ENCODE measurements at regions of chr19 and their contacts with region 1.

Region 1: GRCh38 chr19:2618611-2619010 is 83.9 kb downstream of the GNG7 start:
- DNase-seq: peak; percentile 51 to 84 (median 59)
- H3K4me3 ChIP-seq: peak overlapping the region; percentile 8 to 29
- H3K4me3 Mint-ChIP-seq: peak overlapping the region; percentile 66 to 90 (median 80)
- H3K27ac ChIP-seq: peak overlapping the region; percentile 57
- H3K27ac Mint-ChIP-seq: peak overlapping the region; percentile 89 to 96 (median 93)
- H3K4me1 ChIP-seq: peaks cover 70% of the 10 kb centered on the region
- H3K4me1 Mint-ChIP-seq: peaks cover 40 to 69% (median 54%) of the 10 kb centered on the region in 4 donors
- H3K27me3 ChIP-seq: no peaks in the 10 kb centered on the region
- H3K27me3 Mint-ChIP-seq: no peaks in the 10 kb centered on the region

Region 2: DNA sequence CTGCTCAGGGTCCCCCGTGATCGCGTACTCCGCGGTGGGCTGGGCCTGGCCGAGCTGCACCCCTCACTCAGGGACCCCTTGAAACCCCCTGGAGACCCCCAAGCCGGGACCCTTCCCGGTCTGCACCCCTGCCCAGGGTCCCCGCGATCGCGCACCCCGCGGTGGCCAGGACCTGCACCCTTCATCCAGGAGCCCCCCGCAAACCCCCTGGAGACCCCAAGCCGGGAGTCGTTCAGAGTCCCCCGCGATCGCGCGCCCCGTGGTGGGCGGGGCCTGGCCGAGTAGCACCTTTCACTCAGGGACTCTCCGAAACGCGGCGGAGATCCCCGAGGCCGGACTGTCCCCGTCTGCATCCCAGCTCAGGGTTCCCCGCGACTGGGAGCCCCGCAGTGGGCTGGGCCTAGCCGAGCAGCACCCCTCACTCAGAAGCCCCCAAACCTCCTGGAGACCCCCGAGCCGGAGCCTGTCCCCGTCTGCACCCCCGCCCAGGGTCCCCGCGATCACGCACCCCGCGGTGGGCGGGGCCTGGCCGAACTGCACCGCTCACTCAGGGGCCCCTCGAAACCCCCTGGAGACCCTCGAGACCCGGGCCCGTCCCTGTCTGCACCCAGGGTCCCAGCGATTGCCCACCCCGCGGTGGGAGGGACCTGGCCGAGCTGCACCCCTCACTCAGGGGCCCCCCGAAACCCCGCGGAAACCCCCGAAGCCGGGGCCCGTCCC is 162.6 kb before region 1 on chr19:
- CTCF ChIA-PET with region 1: interaction called, 6 read pairs
- POLR2A ChIA-PET with region 1: interaction called, 10 read pairs
- intact Hi-C with region 1: no loop called
- DNase-seq: peak in 4 of 5 donors; percentile 18 to 79 (median 34)
- H3K4me3 ChIP-seq: peak overlapping the region; percentile 34 to 70
- H3K4me3 Mint-ChIP-seq: peak overlapping the region; percentile 79 to 92 (median 86)
- H3K27ac ChIP-seq: peak overlapping the region; percentile 87
- H3K27ac Mint-ChIP-seq: peak overlapping the region; percentile 76 to 95 (median 87)
- H3K4me1 ChIP-seq: peaks cover 24% of the 10 kb centered on the region
- H3K4me1 Mint-ChIP-seq: peaks cover 6 to 23% (median 13%) of the 10 kb centered on the region in 4 donors
- H3K27me3 ChIP-seq: no peaks in the 10 kb centered on the region
- H3K27me3 Mint-ChIP-seq: no peaks in the 10 kb centered on the region

Region 3: GRCh38 chr19:2507109-2507508 is 111.5 kb before region 1 on chr19:
- CTCF ChIA-PET with region 1: no interaction called
- POLR2A ChIA-PET with region 1: interaction called, 16 read pairs
- intact Hi-C with region 1: no loop called
- DNase-seq: peak; percentile 48 to 77 (median 62)
- H3K4me3 ChIP-seq: no peak overlapping the region
- H3K4me3 Mint-ChIP-seq: peak overlapping the region in 6 of 8 donors; percentile 39 to 72 (median 60)
- H3K27ac ChIP-seq: no peak overlapping the region
- H3K27ac Mint-ChIP-seq: peak overlapping the region; percentile 73 to 93 (median 83)
- H3K4me1 ChIP-seq: peaks cover 25% of the 10 kb centered on the region
- H3K4me1 Mint-ChIP-seq: peaks cover 15 to 41% (median 24%) of the 10 kb centered on the region in 4 donors
- H3K27me3 ChIP-seq: no peaks in the 10 kb centered on the region
- H3K27me3 Mint-ChIP-seq: no peaks in the 10 kb centered on the region

Region 4: GRCh38 chr19:2552859-2553258 is 65.8 kb before region 1 on chr19:
- CTCF ChIA-PET with region 1: no interaction called
- POLR2A ChIA-PET with region 1: interaction called, 10 read pairs
- intact Hi-C with region 1: no loop called
- DNase-seq: peak; percentile 74 to 84 (median 80)
- H3K4me3 ChIP-seq: peak overlapping the region; percentile 36 to 46
- H3K4me3 Mint-ChIP-seq: peak overlapping the region; percentile 52 to 93 (median 82)
- H3K27ac ChIP-seq: peak overlapping the region; percentile 12
- H3K27ac Mint-ChIP-seq: peak overlapping the region; percentile 67 to 96 (median 78)
- H3K4me1 ChIP-seq: peaks cover 24% of the 10 kb centered on the region
- H3K4me1 Mint-ChIP-seq: peaks cover 9 to 18% (median 14%) of the 10 kb centered on the region in 4 donors
- H3K27me3 ChIP-seq: no peaks in the 10 kb centered on the region
- H3K27me3 Mint-ChIP-seq: no peaks in the 10 kb centered on the region

Region 5: GRCh38 chr19:2602391-2603181 is 16.0 kb before region 1 on chr19:
- CTCF ChIA-PET with region 1: interaction called, 77 read pairs
- POLR2A ChIA-PET with region 1: interaction called, 22 read pairs
- intact Hi-C with region 1: loop called (anchors 1 kb)
- DNase-seq: no peak
- H3K4me3 ChIP-seq: no peak overlapping the region
- H3K4me3 Mint-ChIP-seq: no peak overlapping the region
- H3K27ac ChIP-seq: no peak overlapping the region
- H3K27ac Mint-ChIP-seq: peak overlapping the region in 2 of 7 donors; percentile 24 to 68
- H3K4me1 ChIP-seq: peaks cover 13% of the 10 kb centered on the region
- H3K4me1 Mint-ChIP-seq: peaks cover 7 to 18% (median 12%) of the 10 kb centered on the region in 4 donors
- H3K27me3 ChIP-seq: no peaks in the 10 kb centered on the region
- H3K27me3 Mint-ChIP-seq: no peaks in the 10 kb centered on the region

Region 6: GRCh38 chr19:2636897-2637683 is 18.5 kb after region 1 on chr19:
- CTCF ChIA-PET with region 1: interaction called, 116 read pairs
- POLR2A ChIA-PET with region 1: interaction called, 20 read pairs
- intact Hi-C with region 1: loop called (anchors 2 kb)
- DNase-seq: peak; percentile 69 to 72 (median 72)
- H3K4me3 ChIP-seq: no peak overlapping the region
- H3K4me3 Mint-ChIP-seq: peak overlapping the region in 1 of 8 donors; percentile 29
- H3K27ac ChIP-seq: no peak overlapping the region
- H3K27ac Mint-ChIP-seq: no peak overlapping the region
- H3K4me1 ChIP-seq: peaks cover 10% of the 10 kb centered on the region
- H3K4me1 Mint-ChIP-seq: peaks cover 0 to 6% (median 4%) of the 10 kb centered on the region in 4 donors
- H3K27me3 ChIP-seq: no peaks in the 10 kb centered on the region
- H3K27me3 Mint-ChIP-seq: no peaks in the 10 kb centered on the region